A549 (cell line): ENCODE measurements at regions of chr13 and their contacts with region 1.

Region 1: DNA sequence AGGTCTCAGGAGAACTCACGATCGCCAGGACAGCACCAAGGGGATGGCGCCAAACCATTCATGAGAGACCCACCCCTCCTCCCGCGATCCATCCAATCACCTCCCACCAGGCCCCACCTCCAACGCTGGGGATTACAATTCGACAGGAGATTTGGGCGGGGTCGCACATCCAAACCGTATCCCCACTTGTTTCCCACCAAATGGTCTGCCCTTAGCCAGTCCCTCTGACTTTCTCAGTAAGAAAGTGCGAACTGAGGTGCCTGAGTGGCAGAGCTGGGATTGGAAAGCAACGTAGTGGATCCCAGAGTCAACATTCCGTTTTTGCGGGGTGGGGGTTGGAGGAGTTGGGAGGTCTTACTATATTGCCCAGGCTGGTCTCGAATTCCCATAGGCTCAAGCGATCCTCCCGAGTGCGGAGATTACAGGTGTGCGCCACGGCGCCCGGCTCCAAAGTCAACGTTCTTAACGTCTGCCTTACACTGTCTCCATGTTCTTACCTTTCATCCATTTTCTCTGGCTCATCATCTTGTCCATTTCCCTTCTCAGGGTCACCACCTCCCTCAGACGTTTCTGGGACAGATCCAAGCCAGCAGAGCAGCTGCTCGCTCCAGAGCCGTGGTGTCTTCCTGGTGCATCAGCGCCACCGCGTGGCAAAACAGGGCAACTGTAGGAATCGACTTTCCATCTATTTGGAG is 102.7 kb upstream of the ABCC4 start:
- DNase-seq: peak; percentile 75 to 77
- ATAC-seq: peak; percentile 94 to 95
- H3K4me3 ChIP-seq: no peak overlapping the region
- H3K27ac ChIP-seq: peak overlapping the region; percentile 45 to 65; a peak in 4 of 6 replicates
- H3K4me1 ChIP-seq: peaks cover 5% of the 10 kb centered on the region; the same call in 2 of the 3 replicates
- CTCF ChIP-seq: peak; percentile 87
- EP300 ChIP-seq: no peak
- POLR2A ChIP-seq: no peak
- RAD21 ChIP-seq: peak; percentile 94 to 96

Region 2: DNA sequence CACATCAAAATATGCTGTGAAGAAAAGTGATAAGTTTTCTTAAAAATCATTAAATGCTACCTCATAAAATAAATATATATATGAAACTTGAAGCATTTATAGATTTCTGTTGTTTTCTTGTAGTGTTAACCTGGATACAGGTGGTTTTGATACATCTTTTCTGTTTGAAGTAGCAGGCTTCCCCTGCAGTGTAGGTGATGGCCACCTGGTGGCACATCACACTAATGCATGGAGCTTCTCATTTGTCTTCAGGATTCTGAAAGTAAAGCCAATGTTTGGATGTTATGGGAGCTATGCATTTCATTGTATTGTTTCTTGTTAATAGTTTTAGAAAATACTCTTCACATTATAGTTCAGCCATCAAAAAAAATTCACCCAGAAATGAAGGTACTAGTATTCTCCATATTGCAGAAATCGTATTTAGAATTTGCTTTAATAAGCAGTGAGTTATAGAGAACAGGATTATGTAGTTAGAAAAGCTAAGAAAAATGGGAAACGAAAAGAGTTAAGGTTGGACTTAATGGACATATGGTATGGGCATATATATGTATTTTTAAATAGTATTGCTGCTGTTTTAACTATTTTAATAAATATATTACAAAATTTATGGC is 783.6 kb before region 1 on chr13:
- CTCF ChIA-PET with region 1: interaction called, 12 read pairs
- POLR2A ChIA-PET with region 1: no interaction called
- DNase-seq: peak; percentile 13 to 45
- ATAC-seq: peak; percentile 70 to 81; a peak in 4 of 6 replicates
- H3K4me3 ChIP-seq: no peak overlapping the region
- H3K27ac ChIP-seq: no peak overlapping the region
- H3K4me1 ChIP-seq: no peaks in the 10 kb centered on the region
- CTCF ChIP-seq: peak; percentile 59
- EP300 ChIP-seq: no peak
- POLR2A ChIP-seq: no peak
- RAD21 ChIP-seq: peak; percentile 59 to 68; a peak in 4 of 5 replicates

Region 3: DNA sequence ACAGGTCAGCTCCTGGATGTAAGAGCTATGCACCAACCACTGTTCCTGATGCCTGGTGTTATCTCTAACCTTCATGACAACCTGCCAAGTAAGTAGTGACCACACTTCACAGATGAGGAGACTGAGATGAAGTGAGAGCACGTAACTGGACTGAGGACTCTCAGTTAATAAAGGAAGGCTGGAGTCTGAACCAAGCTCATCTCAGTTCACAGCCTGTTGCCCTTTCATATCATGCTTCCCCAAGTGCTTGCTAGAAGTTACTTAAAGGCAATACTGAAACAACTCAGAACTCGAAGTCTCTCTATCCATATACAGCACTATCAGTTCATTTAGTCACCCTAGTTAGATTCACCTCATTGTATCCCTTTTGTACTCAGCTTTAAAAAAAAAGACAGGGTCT is 222.4 kb before region 1 on chr13:
- CTCF ChIA-PET with region 1: interaction called, 230 read pairs
- POLR2A ChIA-PET with region 1: no interaction called
- DNase-seq: no peak
- ATAC-seq: no peak
- H3K4me3 ChIP-seq: no peak overlapping the region
- H3K27ac ChIP-seq: no peak overlapping the region; a peak in 1 of 6 replicates
- H3K4me1 ChIP-seq: peaks cover 20% of the 10 kb centered on the region
- CTCF ChIP-seq: no peak
- EP300 ChIP-seq: no peak
- POLR2A ChIP-seq: no peak
- RAD21 ChIP-seq: no peak

Region 4: GRCh38 chr13:95301183-95301967 is 102.6 kb before region 1 on chr13 and contains the start of gene ABCC4:
- CTCF ChIA-PET with region 1: interaction called, 34 read pairs
- POLR2A ChIA-PET with region 1: interaction called, 3 read pairs
- DNase-seq: peak; percentile 64 to 81
- ATAC-seq: peak; percentile 83
- H3K4me3 ChIP-seq: peak within 1 kb of the TSS; percentile 71
- H3K27ac ChIP-seq: peak within 1 kb of the TSS; percentile 90 to 96
- H3K4me1 ChIP-seq: peaks cover 38% of the 10 kb centered on the region
- CTCF ChIP-seq: no peak
- EP300 ChIP-seq: no peak
- POLR2A ChIP-seq: peak; percentile 27
- RAD21 ChIP-seq: no peak
- polyA plus RNA-seq, gene ABCC4: 46.4 and 56.2 TPM in 2 replicates

Region 5: DNA sequence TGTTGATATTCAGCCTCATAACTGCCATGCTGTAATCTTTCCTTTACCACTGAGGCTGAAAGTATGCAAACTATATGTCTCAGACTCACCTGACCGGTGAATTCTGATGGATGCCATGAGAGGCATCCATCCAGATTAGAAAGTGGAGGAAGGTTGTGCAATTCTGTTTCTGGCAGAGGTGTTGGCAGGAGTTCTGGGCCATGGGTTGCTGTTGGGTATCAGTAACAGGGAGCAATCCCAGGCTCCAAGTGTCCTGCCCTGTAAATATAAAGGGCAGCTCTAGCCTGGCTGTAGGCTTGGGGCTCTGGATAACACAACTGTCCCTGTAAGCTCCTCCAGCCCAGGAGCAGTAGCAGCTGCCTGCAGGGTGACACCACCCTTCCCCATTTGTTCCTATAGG is 25.4 kb before region 1 on chr13:
- CTCF ChIA-PET with region 1: interaction called, 39 read pairs
- POLR2A ChIA-PET with region 1: no interaction called
- DNase-seq: no peak
- ATAC-seq: no peak
- H3K4me3 ChIP-seq: no peak overlapping the region
- H3K27ac ChIP-seq: peak overlapping the region; percentile 9 to 12; a peak in 2 of 6 replicates
- H3K4me1 ChIP-seq: peaks cover 25% of the 10 kb centered on the region
- CTCF ChIP-seq: no peak
- EP300 ChIP-seq: no peak
- POLR2A ChIP-seq: no peak
- RAD21 ChIP-seq: no peak

Region 6: DNA sequence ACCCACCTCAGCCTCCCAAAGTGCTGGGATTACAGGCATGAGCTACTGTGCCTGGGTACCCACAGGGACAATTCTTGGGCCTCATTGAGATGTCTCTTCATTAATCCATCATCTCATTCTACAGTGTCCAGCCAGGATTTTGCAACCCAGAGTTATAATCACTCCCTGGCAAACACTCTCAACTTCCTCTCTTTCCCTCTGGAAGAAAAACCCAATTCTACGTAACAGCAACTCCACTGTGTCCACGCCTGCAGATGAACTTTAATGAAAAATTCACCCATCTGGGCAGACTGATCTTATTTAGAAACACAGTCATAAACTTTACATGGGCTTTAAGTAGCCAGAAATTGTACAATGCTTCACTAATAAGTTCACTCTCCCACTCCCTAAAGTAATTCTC is 12.6 kb before region 1 on chr13:
- CTCF ChIA-PET with region 1: interaction called, 15 read pairs
- POLR2A ChIA-PET with region 1: no interaction called
- DNase-seq: no peak
- ATAC-seq: no peak
- H3K4me3 ChIP-seq: no peak overlapping the region
- H3K27ac ChIP-seq: no peak overlapping the region
- H3K4me1 ChIP-seq: no peaks in the 10 kb centered on the region
- CTCF ChIP-seq: no peak
- EP300 ChIP-seq: no peak
- POLR2A ChIP-seq: no peak
- RAD21 ChIP-seq: no peak

Region 7: GRCh38 chr13:95420501-95420900 is 16.5 kb after region 1 on chr13:
- CTCF ChIA-PET with region 1: interaction called, 24 read pairs
- POLR2A ChIA-PET with region 1: no interaction called
- DNase-seq: no peak
- ATAC-seq: no peak
- H3K4me3 ChIP-seq: no peak overlapping the region
- H3K27ac ChIP-seq: no peak overlapping the region
- H3K4me1 ChIP-seq: no peaks in the 10 kb centered on the region
- CTCF ChIP-seq: no peak
- EP300 ChIP-seq: no peak
- POLR2A ChIP-seq: no peak
- RAD21 ChIP-seq: no peak